ENCODE measurements at regions of chr17 and their contacts with region 1.

Region 1: GRCh38 chr17:81428948-81429774 is 33.9 kb downstream of the BAHCC1 start:
- DNase-seq: peak; percentile 78 to 87
- ATAC-seq: peak; percentile 71 to 82 (median 80)
- H3K4me3 ChIP-seq: peak overlapping the region in 6 of 10 donors; percentile 1 to 26 (median 20)
- H3K27ac ChIP-seq: peak overlapping the region in 5 of 10 donors; percentile 16 to 44 (median 36)
- H3K4me1 ChIP-seq: peaks cover 38 to 63% (median 51%) of the 10 kb centered on the region in 9 donors
- H3K27me3 ChIP-seq: peaks cover 0 to 38% (median 0%) of the 10 kb centered on the region in 7 donors
- CTCF ChIP-seq: no peak

Region 2: GRCh38 chr17:81466564-81467472 is 37.7 kb after region 1 on chr17:
- intact Hi-C with region 1: loop called in 5 of 10 experiments (anchors 5 to 10 kb)
- DNase-seq: no peak
- ATAC-seq: no peak
- H3K4me3 ChIP-seq: no peak overlapping the region
- H3K27ac ChIP-seq: no peak overlapping the region
- H3K4me1 ChIP-seq: peaks cover 0 to 11% (median 0%) of the 10 kb centered on the region in 9 donors
- H3K27me3 ChIP-seq: no peaks in the 10 kb centered on the region
- CTCF ChIP-seq: no peak

Region 3: GRCh38 chr17:81471804-81472456 is 42.8 kb after region 1 on chr17:
- intact Hi-C with region 1: loop called in 5 of 10 experiments (anchors 5 to 10 kb)
- DNase-seq: no peak
- ATAC-seq: peak in 7 of 8 donors; percentile 31 to 68 (median 58)
- H3K4me3 ChIP-seq: no peak overlapping the region
- H3K27ac ChIP-seq: no peak overlapping the region
- H3K4me1 ChIP-seq: peaks cover 0 to 11% (median 0%) of the 10 kb centered on the region in 9 donors
- H3K27me3 ChIP-seq: no peaks in the 10 kb centered on the region
- CTCF ChIP-seq: peak in 4 of 9 donors; percentile 13 to 20 (median 16)